Gastrocnemius medialis (tissue), 4 donors: ENCODE measurements at regions of chr2 and their contacts with region 1.

Region 1: DNA sequence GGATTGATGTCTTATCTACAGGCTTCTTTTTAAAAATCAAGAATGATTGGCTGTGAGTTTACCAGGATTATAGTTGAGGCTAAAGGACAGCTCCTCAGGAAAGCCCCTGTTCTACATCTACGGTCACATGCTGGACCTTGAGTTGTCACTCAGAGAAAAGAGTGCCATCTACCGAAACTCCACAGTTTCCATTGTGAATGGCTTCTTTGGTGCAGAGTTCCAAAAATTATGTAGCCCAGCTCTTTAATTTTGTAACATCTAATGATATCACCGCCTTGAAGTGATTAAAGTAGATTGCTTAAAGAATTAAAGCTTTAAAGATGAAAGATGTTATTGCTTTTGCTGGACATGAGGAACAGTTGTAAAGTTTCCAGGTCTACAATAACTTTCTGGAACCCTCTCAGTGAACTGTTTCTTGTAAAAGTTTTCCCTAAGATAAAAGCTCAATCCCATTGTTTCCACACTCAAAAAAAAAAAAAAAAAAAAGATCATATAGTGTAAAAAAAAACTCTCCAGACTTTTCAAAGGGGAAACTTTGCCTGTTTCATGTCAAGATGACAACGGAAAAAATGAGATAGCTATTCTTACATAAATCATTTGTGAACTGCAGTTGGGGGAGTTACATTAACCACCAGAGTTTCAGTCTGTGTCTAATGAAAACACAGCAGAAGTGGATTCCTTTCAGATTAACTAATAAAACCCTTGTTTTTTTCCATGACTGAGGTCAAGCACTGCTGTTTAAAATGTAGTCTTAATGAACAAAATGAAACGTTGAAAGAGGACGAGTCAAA is 4.3 kb downstream of the COL3A1 start:
- DNase-seq: peak; percentile 19
- ATAC-seq: peak; percentile 51 to 58
- H3K4me3 ChIP-seq: peak overlapping the region; percentile 14 to 48 (median 16)
- H3K27ac ChIP-seq: peak overlapping the region; percentile 62 to 78 (median 70)
- H3K4me1 ChIP-seq: peaks cover 0 to 6% of the 10 kb centered on the region in 2 donors
- H3K27me3 ChIP-seq: no peaks in the 10 kb centered on the region
- CTCF ChIP-seq: peak in 1 of 5 experiments; percentile 8
- POLR2A ChIP-seq: no peak

Region 2: GRCh38 chr2:187547353-187547979 is 1431.0 kb before region 1 on chr2:
- in situ Hi-C with region 1: loop called in 1 of 4 experiments (anchors 25 kb)
- intact Hi-C with region 1: no loop called
- DNase-seq: peak; percentile 74 to 81
- ATAC-seq: peak; percentile 94 to 99
- H3K4me3 ChIP-seq: no peak overlapping the region
- H3K27ac ChIP-seq: peak overlapping the region; percentile 71 to 85 (median 78)
- H3K4me1 ChIP-seq: peaks cover 8 to 32% of the 10 kb centered on the region in 2 donors
- H3K27me3 ChIP-seq: no peaks in the 10 kb centered on the region
- CTCF ChIP-seq: no peak
- POLR2A ChIP-seq: peak; percentile 26 to 52

Region 3: GRCh38 chr2:188788621-188789020 is 189.9 kb before region 1 on chr2:
- in situ Hi-C with region 1: loop called in 1 of 4 experiments (anchors 10 kb)
- intact Hi-C with region 1: loop called (anchors 5 kb)
- DNase-seq: peak; percentile 39 to 64
- ATAC-seq: peak; percentile 47 to 75
- H3K4me3 ChIP-seq: peak overlapping the region in 1 of 4 donors; percentile 9
- H3K27ac ChIP-seq: peak overlapping the region; percentile 45 to 66 (median 54)
- H3K4me1 ChIP-seq: peaks cover 0 to 3% of the 10 kb centered on the region in 2 donors
- H3K27me3 ChIP-seq: no peaks in the 10 kb centered on the region
- CTCF ChIP-seq: no peak
- POLR2A ChIP-seq: no peak

Region 4: GRCh38 chr2:189347540-189347939 is 369.1 kb after region 1 on chr2:
- in situ Hi-C with region 1: no loop called
- intact Hi-C with region 1: loop called (anchors 5 kb)
- DNase-seq: peak; percentile 52 to 59
- ATAC-seq: peak; percentile 91 to 94
- H3K4me3 ChIP-seq: no peak overlapping the region
- H3K27ac ChIP-seq: peak overlapping the region; percentile 44 to 70 (median 56)
- H3K4me1 ChIP-seq: peaks cover 13 to 23% of the 10 kb centered on the region in 2 donors
- H3K27me3 ChIP-seq: no peaks in the 10 kb centered on the region
- CTCF ChIP-seq: peak in 3 of 5 experiments; percentile 14 to 21 (median 20)
- POLR2A ChIP-seq: no peak